ENCODE measurements at regions of chr2 and their contacts with region 1.

Region 1: DNA sequence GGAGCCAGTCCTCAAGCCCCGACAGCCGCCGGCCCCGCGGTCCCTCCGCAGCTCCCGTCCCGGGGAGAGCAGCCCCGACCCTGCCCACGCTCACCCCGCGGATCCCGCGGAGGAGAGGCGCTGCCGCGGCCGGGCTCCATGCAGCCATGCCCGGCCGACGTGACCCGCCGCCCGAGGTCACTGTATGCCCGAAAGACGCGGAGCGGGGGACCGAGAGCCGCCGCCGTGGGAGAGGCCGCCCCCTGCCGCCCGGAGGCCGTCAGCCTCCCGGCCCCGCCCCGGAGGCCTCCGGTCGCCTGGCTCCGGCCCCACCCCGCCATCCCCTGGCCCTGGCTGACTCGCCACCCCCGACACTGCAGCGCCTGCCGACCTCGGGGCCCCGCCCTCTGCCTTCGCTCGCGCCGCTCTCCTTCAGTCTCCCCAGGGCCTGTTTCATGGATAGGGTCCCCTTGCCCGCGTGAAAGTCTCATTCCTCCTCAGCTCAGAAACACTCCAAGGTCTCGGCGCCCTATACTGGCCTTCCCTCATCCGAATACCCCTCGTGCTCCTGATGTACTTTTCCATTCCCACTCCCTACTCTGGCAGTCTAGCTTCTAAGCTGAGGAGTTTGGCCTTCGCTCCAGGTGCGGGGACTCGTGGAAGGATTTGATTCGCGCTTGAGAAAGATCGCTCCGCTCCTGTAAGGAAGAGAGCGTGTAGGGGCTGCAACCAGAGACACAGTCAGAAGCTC is at the start of gene BOLA3:
- DNase-seq: peak; percentile 91
- H3K4me3 ChIP-seq: peak within 1 kb of the TSS; percentile 74
- H3K27ac ChIP-seq: peak within 1 kb of the TSS; percentile 47
- H3K4me1 ChIP-seq: peaks cover 24% of the 10 kb centered on the region
- CTCF ChIP-seq: peak; percentile 83
- total RNA-seq, gene BOLA3: 33.6 and 45.8 TPM in 2 replicates

Region 2: DNA sequence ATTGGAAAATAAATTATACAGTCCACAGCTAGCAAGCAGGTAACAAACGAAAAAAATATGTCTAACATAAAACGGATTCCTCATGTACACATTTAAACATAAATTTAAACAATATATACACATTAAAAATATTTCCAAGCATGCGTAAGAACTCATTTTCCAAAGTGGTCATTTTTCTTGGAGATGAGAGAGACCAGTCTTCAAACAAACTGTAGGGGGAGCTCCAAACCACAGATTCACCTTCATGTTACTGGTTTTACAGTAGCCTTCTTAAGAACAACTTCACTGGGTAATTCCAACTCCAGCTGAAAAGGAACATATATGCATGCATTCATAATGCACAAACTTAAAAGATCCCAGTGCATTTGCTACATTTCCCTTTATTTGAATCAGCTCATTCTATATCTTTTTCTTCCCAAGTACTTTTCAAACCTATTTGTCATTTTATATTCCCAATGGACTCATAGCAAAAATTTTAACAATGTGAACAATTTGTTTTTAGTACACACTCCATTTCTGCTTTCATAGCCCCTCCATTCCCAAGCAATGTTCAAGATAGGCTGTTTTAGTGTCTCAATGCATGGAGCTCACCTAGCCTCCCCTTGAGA is 323.9 kb before region 1 on chr2:
- CTCF ChIA-PET with region 1: interaction called, 10 read pairs
- POLR2A ChIA-PET with region 1: interaction called, 6 read pairs
- intact Hi-C with region 1: loop called (anchors 1 kb)
- DNase-seq: peak; percentile 79
- H3K4me3 ChIP-seq: no peak overlapping the region
- H3K27ac ChIP-seq: no peak overlapping the region
- H3K4me1 ChIP-seq: peaks cover 29% of the 10 kb centered on the region
- CTCF ChIP-seq: peak; percentile 98

Region 3: DNA sequence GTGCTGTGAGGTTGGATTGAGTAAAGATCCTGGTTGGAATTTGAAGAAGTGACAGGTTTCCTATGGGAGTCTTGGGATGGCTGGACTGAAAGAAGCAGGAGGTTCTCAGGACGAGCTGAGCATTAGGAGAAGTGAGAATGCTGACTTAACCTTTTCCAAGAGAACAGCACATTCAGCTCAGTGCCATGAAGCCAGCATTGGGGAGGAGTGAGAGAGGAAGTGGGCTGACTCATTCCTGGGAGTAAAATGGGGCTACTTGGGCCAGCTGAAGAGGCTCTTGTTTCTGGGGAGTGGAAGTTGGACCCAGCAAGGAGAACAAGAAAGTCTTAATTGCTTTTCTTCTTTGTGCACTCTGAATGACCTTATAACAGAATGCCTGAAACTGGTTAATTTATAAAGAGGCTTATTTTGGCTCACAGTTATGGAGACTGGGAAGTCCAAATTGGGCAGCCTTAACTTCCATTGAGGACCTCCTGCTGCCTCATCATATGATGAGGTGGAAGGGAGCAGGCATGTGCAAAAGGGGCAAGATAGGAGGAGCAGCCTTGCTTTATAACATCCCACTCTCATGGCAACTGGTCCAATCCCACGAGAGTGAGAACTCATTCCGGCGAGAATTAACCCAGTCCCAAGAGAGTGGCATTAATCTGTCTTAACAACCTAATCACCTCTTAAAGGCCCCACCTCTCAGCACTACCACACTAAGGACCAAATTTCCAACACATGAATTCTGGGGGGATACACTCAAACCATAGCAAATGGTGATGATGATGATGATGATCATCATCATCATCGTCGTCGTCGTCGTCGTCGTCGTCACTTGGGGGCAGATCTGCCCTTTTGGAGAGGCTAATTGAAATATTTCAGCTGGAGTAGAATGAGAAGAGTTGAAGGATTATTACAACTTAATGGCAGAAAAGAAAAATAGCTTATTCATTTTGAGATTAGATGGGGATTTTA is 195.1 kb before region 1 on chr2:
- CTCF ChIA-PET with region 1: no interaction called
- POLR2A ChIA-PET with region 1: no interaction called
- intact Hi-C with region 1: no loop called
- DNase-seq: no peak
- H3K4me3 ChIP-seq: no peak overlapping the region
- H3K27ac ChIP-seq: no peak overlapping the region
- H3K4me1 ChIP-seq: no peaks in the 10 kb centered on the region
- CTCF ChIP-seq: no peak

Region 4: GRCh38 chr2:73985308-73986084 is 162.4 kb before region 1 on chr2:
- CTCF ChIA-PET with region 1: no interaction called
- POLR2A ChIA-PET with region 1: no interaction called
- intact Hi-C with region 1: loop called (anchors 5 kb)
- DNase-seq: peak; percentile 69
- H3K4me3 ChIP-seq: peak overlapping the region; percentile 67
- H3K27ac ChIP-seq: peak overlapping the region; percentile 49
- H3K4me1 ChIP-seq: peaks cover 64% of the 10 kb centered on the region
- CTCF ChIP-seq: no peak

Region 5: DNA sequence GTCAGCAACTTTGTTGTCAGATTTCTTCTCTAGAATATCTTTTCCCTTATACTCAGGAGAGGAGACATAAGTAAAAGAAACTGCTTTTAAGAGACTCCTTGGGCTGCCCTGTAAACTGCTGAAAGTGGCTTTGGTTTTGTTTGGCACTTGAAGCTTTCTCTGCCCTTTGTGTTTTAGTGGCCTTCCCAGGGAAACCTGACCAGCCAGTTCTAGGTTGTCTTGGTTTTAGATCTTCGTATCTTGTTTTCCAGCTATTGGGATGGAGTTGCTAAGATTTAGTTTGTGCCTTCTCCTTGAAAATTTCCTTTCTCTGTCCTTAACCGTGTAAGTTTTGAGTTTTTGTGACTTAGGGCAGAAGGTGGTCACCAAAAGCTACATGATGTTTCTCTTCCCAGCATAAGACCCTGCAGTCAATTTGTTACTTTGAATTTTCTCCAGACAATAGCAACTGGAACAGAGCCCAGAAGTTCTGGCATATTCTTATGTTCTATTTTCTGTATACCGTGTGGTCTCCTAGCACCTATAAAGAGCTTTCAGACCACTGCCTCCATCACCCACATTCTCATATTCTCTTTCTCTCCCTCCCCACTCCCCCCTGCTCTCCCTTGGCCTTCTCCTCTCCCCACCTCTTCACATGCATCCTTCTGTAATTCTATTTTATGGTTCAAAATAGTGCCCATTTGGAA is 81.2 kb before region 1 on chr2:
- CTCF ChIA-PET with region 1: no interaction called
- POLR2A ChIA-PET with region 1: no interaction called
- intact Hi-C with region 1: no loop called
- DNase-seq: no peak
- H3K4me3 ChIP-seq: no peak overlapping the region
- H3K27ac ChIP-seq: no peak overlapping the region
- H3K4me1 ChIP-seq: no peaks in the 10 kb centered on the region
- CTCF ChIP-seq: no peak

Region 6: GRCh38 chr2:74198461-74199274 is 50.8 kb after region 1 on chr2 and contains the start of gene MTHFD2:
- CTCF ChIA-PET with region 1: no interaction called
- POLR2A ChIA-PET with region 1: interaction called, 3 read pairs
- intact Hi-C with region 1: loop called (anchors 1 kb)
- DNase-seq: peak; percentile 99
- H3K4me3 ChIP-seq: peak within 1 kb of the TSS; percentile 84
- H3K27ac ChIP-seq: peak within 1 kb of the TSS; percentile 88
- H3K4me1 ChIP-seq: peaks cover 49% of the 10 kb centered on the region
- CTCF ChIP-seq: peak; percentile 81
- total RNA-seq, gene MTHFD2: 220 and 250 TPM in 2 replicates

Region 7: GRCh38 chr2:74250189-74250631 is 102.3 kb after region 1 on chr2:
- CTCF ChIA-PET with region 1: no interaction called
- POLR2A ChIA-PET with region 1: no interaction called
- intact Hi-C with region 1: no loop called
- DNase-seq: peak; percentile 77
- H3K4me3 ChIP-seq: no peak overlapping the region
- H3K27ac ChIP-seq: no peak overlapping the region
- H3K4me1 ChIP-seq: no peaks in the 10 kb centered on the region
- CTCF ChIP-seq: peak; percentile 99

Region 8: DNA sequence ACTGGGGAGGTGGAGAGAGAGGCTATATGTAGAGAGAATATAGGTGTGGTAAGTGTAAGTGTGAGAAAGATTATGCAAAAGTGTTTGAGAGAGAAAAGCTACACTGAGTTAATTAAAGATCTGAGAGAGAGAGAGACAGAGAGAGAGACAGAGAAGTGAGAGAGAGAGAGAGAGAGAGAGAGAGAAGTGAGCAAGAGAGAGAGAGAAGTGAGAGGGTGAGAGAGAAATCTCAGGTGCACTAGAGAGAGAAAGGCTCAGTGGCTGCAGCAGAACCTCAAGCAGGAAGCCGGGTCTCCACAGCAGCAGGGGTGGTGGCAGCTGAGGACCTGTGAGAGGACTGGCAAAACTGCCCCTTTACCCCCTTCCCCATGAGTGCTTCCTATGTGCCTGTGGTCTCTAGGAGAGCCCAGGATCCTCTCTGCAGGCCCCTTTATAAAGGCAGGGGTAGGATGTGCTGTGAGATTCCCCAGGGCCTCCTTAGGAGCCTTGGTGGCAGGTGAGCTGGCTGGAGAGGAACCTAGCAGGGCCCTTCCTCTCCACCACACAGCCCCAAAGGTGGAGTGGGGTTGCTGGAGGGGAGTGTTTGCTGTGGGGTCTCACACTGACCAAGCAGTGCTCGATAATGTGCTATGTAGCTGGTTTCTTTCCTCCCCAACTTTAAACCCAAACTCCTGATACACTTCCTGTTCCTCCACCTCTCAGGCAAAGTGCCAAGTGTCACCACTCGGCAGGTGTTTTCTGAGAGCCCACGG is 142.8 kb after region 1 on chr2:
- CTCF ChIA-PET with region 1: no interaction called
- POLR2A ChIA-PET with region 1: no interaction called
- intact Hi-C with region 1: no loop called
- DNase-seq: peak; percentile 87
- H3K4me3 ChIP-seq: peak overlapping the region; percentile 28
- H3K27ac ChIP-seq: peak overlapping the region; percentile 72
- H3K4me1 ChIP-seq: peaks cover 25% of the 10 kb centered on the region
- CTCF ChIP-seq: no peak; the same call in 1 of the 2 replicates

Region 9: GRCh38 chr2:74334931-74335333 is 187.0 kb after region 1 on chr2:
- CTCF ChIA-PET with region 1: no interaction called
- POLR2A ChIA-PET with region 1: no interaction called
- intact Hi-C with region 1: loop called (anchors 10 kb)
- DNase-seq: peak; percentile 72
- H3K4me3 ChIP-seq: no peak overlapping the region
- H3K27ac ChIP-seq: no peak overlapping the region
- H3K4me1 ChIP-seq: no peaks in the 10 kb centered on the region
- CTCF ChIP-seq: peak; percentile 95